ENCODE measurements at regions of chr2 and their contacts with region 1.

Region 1: GRCh38 chr2:64819774-64820696 is 166.3 kb upstream of the SERTAD2 start:
- DNase-seq: peak; percentile 75
- ATAC-seq: peak; percentile 98
- H3K4me3 Mint-ChIP-seq: peak overlapping the region; percentile 35
- H3K27ac Mint-ChIP-seq: peak overlapping the region; percentile 92
- H3K4me1 Mint-ChIP-seq: peaks cover 23% of the 10 kb centered on the region
- H3K27me3 Mint-ChIP-seq: no peaks in the 10 kb centered on the region

Region 2: GRCh38 chr2:64807417-64807816 is 12.6 kb before region 1 on chr2:
- CTCF ChIA-PET with region 1: interaction called, 5 read pairs
- POLR2A ChIA-PET with region 1: no interaction called
- intact Hi-C with region 1: loop called (anchors 1 kb)
- DNase-seq: peak; percentile 84
- ATAC-seq: peak; percentile 99
- H3K4me3 Mint-ChIP-seq: no peak overlapping the region
- H3K27ac Mint-ChIP-seq: peak overlapping the region; percentile 20
- H3K4me1 Mint-ChIP-seq: peaks cover 29% of the 10 kb centered on the region
- H3K27me3 Mint-ChIP-seq: no peaks in the 10 kb centered on the region

Measured in activated CD4-positive, alpha-beta T cell treated with anti-CD3 and anti-CD28 coated beads for 36 hours (primary cell).